Left cardiac atrium (tissue), 4 donors: ENCODE measurements at regions of chr2 and their contacts with region 1.

Region 1: DNA sequence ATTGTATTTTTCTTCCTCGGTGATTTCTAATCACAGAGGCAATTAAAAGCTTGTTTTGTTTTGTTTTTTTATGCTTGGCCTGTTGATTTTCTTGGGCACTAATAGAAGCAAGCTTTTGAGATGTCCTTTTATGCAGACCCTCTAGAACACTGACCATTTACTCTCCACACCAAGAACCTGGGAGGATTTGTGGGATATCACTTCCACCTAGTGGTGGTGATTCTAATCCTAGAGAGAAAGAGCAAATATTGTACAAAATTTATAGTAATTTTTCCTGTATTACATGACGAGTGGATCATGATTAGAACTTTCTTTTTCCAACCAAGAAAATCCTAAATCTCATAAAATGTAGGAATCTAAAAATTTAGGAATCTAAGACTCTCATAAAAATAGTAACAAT is 23.4 kb downstream of the NEMP2 start:
- DNase-seq: no peak
- ATAC-seq: peak; percentile 37 to 53

Region 2: DNA sequence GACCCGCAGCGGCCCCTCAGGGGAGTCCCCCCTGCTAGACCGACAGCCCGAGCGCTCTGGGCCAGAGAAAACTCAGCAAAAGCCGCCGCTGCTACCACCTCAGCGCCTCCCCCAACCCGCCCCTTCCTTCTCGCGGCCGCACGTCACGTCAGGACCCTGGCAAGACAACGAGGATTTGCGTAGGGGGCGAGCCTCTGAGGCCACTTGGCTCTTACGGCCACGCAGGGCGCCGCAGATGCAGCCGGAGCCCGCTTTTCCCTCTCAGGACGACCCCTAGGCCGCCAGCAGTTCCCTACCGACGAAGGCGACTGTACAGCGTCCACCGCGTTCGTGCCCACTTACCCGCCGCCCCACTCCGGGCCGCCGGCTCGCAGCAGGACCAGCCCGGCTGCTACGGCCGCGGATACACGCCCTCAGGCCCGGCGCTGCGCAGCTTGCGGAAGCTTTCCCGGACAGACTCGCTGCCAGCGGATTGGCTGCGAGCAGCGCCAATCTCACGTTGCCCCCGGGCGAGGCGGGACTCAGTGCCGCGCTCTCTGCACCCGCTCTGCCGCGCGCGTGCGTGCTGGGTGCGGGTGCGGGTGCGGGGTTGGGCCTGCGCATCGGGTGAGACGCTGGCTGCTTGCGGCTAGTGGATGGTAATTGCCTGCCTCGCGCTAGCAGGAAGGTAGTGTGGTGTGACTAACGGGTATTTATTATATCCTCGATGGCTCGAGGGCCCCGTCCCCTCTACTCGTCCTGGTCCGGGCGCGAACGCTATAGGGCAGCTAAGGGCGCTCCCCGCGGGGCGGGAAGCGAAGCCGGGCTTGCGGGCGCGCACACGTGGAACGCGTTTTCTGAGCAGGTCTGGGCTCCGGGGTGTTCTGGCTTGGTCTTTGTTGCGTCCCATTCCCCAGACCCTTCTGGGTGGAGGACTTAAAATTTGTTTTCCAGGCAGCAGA is 726.9 kb before region 1 on chr2 and contains the starts of genes ORMDL1 and PMS1:
- intact Hi-C with region 1: no loop called
- DNase-seq: peak; percentile 97
- ATAC-seq: peak; percentile 99
- total RNA-seq, gene ORMDL1: 29.7 to 40.2 TPM
- total RNA-seq, gene PMS1: 13.8 to 14.9 TPM

Region 3: DNA sequence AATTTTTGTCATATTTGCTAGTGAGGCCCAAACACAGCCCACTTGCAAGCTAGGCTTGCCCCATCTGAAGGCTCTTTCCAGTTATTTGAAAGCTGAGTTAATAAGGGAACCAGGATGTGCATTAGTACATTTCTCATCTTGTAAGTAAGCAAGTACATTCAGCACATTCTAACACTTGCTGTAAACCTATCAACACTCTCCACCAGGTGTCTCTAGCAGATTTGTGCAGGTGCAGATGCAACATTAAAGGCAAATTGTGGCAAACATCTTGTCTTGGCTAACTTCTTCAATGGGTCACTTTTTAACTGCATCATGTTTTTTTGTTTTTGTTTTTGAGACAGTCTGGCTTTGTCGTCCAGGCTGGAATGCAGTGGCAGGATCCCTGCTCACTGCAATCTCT is 128.3 kb before region 1 on chr2:
- intact Hi-C with region 1: loop called in 1 of 2 experiments (anchors 2 kb)
- DNase-seq: no peak
- ATAC-seq: peak in 1 of 2 donors; percentile 71

Region 4: DNA sequence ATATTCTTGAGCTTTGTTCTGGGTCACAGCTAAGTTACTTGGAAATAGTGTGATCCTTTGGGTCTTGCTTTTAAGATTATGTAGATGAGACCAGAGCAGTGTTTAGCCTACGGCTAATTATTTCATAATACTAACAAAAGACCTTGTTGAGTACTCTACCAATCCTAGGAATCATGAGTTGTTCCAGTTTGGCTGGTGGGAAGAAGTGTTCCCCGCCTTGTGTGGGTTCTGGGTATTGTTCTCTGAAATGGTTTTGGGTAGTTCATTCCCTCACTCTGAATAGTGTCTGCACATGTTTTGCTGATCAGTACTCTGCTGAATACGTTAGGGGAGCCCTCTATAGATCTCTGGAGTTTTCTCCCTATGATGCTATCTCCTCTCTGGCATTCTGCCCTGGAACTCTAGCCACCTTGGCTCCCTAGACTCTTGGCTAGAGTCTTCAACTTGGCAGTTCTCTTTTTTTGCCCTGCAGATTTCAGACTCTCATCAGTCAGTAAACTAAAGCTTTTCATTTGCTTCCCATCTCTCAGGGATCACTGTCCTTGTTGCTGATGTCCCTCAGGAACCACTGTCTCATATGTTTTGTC is 25.0 kb before region 1 on chr2:
- intact Hi-C with region 1: no loop called
- DNase-seq: no peak
- ATAC-seq: peak in 1 of 2 donors; percentile 49

Region 5: GRCh38 chr2:191218292-191218898 is 707.3 kb after region 1 on chr2:
- intact Hi-C with region 1: no loop called
- DNase-seq: peak; percentile 42
- ATAC-seq: peak; percentile 39 to 69